Posterior cingulate gyrus (tissue), 11 donors: ENCODE measurements at regions of chr2 and their contacts with region 1.

Region 1: DNA sequence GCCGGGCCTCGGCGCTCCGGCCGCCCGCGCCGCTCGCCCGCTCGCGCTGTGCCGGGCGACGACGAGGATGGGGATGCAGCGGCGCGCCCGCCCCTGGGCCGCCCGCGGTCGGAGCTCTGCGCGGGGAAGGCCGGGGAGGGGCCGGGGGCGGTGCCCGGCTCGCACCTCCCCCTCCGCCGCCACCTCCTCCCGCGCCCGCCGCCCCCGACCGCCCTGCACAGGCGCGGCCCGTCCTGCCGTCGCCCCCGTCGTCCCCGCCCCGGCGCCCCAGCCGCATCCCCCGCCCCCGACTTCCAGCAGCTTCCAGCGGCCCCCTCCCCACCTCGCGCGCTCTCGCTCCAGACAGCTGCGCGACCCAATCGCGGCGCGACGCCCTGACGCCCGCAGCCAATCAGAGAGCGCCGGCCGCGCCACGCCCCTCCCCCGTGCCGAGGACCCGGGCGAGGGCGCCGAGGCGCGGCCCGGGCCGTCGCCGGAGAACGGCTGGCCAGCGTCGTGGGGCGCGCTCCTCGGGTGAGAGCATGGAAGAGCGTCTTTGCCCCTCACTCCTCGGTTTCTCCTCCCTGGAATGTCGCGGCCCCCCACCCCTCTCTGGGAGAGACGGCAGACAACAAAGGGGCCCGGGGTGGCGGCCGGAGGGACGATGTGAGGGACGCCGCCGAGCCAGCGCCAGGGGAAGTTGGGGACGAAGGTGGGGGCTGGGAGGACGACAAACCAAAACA is at the start of gene MBOAT2:
- DNase-seq: peak; percentile 80 to 98 (median 86)

Region 2: DNA sequence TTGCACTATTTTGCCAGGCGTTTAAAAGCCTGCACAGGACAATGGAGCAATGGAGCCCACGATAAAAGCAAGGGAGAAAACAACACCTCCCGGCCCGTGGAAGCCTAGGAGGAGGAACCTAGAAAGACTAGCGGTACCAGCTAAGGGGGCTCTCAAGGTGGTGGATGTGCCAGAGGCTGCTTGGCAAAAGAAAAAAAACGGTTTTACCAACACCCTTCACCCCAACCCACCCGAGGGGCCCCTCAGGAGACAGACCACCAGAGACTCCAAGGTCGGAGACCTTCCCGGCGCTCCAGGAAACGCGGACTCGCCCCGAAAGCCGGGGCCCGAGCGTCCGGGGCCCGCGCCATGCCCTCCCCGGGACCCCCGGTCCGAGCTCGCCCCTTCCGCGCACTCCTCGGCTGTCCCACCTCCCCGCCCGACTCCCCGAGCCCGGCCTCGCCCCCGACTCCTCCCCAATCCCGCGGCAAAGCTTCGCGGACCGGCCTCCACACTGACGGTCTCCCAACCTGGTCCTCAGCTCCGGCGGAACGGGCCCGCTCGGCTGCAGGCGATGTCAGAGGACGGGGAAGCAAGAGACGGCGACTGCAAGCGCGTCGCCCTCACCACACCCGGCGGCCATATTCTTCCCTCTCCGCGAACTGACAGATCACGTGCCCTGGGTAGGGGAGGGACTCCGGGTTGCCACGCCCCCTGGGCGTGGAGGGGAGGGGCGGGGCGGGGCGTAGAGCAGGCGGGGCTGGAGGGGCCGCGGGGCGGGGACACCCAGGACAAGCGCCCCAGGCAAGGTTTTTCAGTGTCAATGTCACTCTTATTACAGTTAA is 166.6 kb before region 1 on chr2 and contains the start of gene KIDINS220:
- intact Hi-C with region 1: loop called (anchors 5 kb)
- DNase-seq: peak; percentile 75 to 98 (median 90)

Region 3: GRCh38 chr2:8872821-8873432 is 130.8 kb before region 1 on chr2:
- intact Hi-C with region 1: loop called (anchors 10 kb)
- DNase-seq: no peak

Region 4: DNA sequence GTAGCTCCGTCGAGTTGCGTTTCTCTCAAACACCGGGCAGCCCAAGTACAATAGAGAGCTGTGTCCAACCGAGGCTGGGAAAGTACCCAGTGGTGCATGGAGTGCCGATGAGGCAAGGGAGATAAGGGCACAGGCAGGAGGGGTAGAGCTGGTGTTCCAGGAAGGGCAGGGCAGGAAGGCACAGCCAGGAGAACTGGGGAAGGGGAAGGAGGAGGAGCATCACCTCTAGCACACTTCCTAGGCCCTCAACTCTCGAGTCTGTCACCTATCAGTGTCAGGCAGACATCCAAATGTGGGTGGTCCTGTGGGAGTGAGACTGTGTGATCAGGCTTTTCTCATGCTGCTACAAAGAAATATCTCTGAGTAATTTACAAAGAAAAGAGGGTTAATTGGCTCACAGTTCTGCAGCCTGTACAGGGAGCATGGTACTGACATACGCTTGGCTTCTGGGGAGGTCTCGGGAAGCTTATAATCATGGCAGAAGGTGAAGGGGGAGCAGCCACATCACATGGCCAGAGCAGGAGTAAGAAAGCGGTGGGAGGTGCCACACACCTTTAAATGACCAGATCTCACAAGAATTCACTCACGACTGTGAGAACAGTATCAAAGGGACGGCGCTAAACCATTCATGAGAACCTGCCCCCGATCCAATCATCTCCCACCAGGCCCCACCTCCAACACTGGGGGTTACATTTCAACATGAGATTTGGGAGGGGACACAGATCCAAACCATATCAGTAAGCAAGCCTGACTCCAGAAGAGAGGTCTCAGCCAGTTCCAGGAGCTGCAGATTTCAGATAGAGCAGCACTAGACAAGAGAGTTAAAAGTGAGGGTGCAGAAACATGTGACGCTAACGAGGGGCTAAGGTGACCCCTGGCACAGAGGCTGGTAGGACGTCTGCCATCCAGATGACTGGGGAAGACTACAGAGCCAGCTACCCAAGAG is 76.0 kb before region 1 on chr2:
- intact Hi-C with region 1: loop called (anchors 5 kb)
- DNase-seq: peak in 7 of 10 donors; percentile 24 to 92 (median 61)

Region 5: GRCh38 chr2:9074930-9075329 is 71.2 kb after region 1 on chr2:
- intact Hi-C with region 1: no loop called
- DNase-seq: no peak

Region 6: GRCh38 chr2:9124231-9124741 is 120.5 kb after region 1 on chr2:
- intact Hi-C with region 1: no loop called
- DNase-seq: peak in 1 of 10 donors; percentile 72

Region 7: GRCh38 chr2:9310377-9310776 is 306.6 kb after region 1 on chr2:
- intact Hi-C with region 1: no loop called
- DNase-seq: peak in 1 of 10 donors; percentile 62